CD4-positive, alpha-beta memory T cell (primary cell): ENCODE measurements at regions of chr5 and their contacts with region 1.

Region 1: GRCh38 chr5:43484106-43484849 is 613 bp upstream of the TMEM267 start:
- DNase-seq: peak; percentile 85 to 89 (median 87)
- H3K4me3 ChIP-seq: peak overlapping the region; percentile 50 to 59
- H3K4me3 Mint-ChIP-seq: peak overlapping the region; percentile 96 to 99 (median 98)
- H3K27ac ChIP-seq: peak overlapping the region; percentile 92
- H3K27ac Mint-ChIP-seq: peak overlapping the region; percentile 98 to 100 (median 100)
- H3K4me1 ChIP-seq: peaks cover 40% of the 10 kb centered on the region
- H3K4me1 Mint-ChIP-seq: peaks cover 21 to 57% (median 31%) of the 10 kb centered on the region in 4 donors
- H3K27me3 ChIP-seq: no peaks in the 10 kb centered on the region
- H3K27me3 Mint-ChIP-seq: no peaks in the 10 kb centered on the region

Region 2: DNA sequence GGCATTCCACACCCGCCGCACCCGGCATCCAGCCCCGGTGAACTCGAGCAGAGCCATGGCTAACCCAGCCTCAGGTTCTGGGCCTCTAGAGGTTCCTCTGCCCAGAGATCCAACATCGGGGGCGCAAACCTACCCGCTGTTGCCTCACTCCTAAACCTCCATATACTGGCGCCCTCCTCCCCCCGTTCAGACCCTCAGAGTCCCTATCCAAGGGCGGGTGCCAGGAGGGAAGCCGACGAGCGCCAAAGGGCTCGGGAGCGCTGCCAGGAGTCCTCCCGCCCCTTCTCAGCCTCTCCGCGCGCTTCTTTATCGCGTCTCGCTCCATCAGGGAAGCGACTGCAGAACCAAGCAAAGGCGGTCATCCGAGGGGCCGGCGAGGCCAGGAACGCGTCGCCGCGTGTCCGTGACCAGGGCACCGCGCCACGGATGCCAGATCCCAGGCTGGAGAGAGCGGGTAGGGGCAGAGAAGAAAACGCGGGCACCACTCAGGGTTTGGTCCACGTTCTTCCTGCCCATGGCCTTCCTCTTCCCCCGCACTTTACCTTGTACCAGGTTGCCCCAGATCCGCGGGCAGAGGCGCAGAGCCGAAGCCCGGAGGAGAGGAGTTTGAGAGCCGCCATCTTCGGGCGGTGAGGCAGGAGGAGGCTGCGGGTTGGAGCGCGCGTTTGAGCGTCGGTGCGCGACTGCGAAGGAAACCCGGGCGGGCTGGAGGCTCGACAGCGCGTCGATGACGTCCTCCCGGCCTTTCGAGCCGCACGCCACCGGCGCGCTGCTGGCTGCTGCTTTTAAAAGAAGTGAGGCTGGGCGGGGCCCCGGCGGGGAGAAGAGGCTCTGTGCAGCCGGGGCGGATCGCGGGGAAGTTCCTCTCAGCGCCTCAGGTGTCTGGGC is 1614.3 kb before region 1 on chr5 and contains the start of gene OXCT1:
- CTCF ChIA-PET with region 1: interaction called, 3 read pairs
- POLR2A ChIA-PET with region 1: interaction called, 13 read pairs
- intact Hi-C with region 1: no loop called
- DNase-seq: peak; percentile 91 to 96 (median 96)
- H3K4me3 ChIP-seq: peak within 1 kb of the TSS; percentile 74 to 81
- H3K4me3 Mint-ChIP-seq: peak within 1 kb of the TSS; percentile 85 to 96 (median 91)
- H3K27ac ChIP-seq: peak within 1 kb of the TSS; percentile 93
- H3K27ac Mint-ChIP-seq: peak within 1 kb of the TSS; percentile 94 to 99 (median 97)
- H3K4me1 ChIP-seq: peaks cover 55% of the 10 kb centered on the region
- H3K4me1 Mint-ChIP-seq: peaks cover 37 to 70% (median 46%) of the 10 kb centered on the region in 4 donors
- H3K27me3 ChIP-seq: no peaks in the 10 kb centered on the region
- H3K27me3 Mint-ChIP-seq: no peaks in the 10 kb centered on the region
- total RNA-seq, gene OXCT1: 34.1 to 37.5 TPM

Region 3: DNA sequence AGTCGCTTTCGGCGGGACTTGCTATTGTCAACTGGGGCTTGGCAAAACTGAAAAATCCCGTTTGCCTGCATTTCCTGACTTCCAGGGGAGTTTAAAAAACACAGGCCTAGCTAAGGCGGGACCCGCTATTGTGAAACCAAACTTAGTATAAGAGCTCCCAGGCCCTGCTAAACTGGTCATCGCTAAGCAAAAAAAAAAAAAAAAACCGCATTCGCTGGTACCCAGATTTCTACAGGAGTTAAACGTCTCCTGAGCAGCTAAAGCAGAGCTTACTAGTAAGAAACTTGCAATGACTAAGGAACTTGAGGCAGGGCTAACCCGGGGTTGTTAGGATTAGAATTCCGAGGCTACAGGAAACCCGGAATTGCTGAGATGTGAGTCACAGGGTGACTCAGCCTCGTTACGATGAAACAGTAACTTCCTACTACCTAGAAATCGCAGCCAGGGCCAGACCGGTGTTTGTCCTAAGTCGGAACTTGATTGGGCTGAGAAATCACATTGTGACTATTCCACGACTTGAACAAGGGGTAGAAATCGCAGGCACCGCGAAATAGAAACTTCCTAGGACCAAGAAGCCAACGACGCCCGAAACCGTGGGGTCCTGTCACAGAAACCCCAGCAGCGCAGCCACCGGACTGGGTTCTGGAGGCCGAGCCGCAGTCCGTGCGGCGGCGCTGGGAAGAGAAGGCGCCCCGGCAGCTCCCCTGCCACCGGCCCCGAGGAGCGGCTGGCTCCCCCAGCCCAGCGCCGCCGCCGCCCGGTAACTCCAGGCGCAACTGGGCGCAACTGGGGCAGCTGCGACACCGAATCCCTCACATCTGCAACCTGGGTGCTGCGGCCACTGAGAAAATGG is 533.6 kb before region 1 on chr5:
- CTCF ChIA-PET with region 1: interaction called, 6 read pairs
- POLR2A ChIA-PET with region 1: interaction called, 44 read pairs
- intact Hi-C with region 1: no loop called
- DNase-seq: peak; percentile 61 to 90 (median 66)
- H3K4me3 ChIP-seq: peak overlapping the region; percentile 83 to 90
- H3K4me3 Mint-ChIP-seq: peak overlapping the region; percentile 93 to 99 (median 98)
- H3K27ac ChIP-seq: peak overlapping the region; percentile 96
- H3K27ac Mint-ChIP-seq: peak overlapping the region; percentile 99 to 100 (median 100)
- H3K4me1 ChIP-seq: peaks cover 22% of the 10 kb centered on the region
- H3K4me1 Mint-ChIP-seq: peaks cover 7 to 42% (median 30%) of the 10 kb centered on the region in 4 donors
- H3K27me3 ChIP-seq: no peaks in the 10 kb centered on the region
- H3K27me3 Mint-ChIP-seq: no peaks in the 10 kb centered on the region

Region 4: DNA sequence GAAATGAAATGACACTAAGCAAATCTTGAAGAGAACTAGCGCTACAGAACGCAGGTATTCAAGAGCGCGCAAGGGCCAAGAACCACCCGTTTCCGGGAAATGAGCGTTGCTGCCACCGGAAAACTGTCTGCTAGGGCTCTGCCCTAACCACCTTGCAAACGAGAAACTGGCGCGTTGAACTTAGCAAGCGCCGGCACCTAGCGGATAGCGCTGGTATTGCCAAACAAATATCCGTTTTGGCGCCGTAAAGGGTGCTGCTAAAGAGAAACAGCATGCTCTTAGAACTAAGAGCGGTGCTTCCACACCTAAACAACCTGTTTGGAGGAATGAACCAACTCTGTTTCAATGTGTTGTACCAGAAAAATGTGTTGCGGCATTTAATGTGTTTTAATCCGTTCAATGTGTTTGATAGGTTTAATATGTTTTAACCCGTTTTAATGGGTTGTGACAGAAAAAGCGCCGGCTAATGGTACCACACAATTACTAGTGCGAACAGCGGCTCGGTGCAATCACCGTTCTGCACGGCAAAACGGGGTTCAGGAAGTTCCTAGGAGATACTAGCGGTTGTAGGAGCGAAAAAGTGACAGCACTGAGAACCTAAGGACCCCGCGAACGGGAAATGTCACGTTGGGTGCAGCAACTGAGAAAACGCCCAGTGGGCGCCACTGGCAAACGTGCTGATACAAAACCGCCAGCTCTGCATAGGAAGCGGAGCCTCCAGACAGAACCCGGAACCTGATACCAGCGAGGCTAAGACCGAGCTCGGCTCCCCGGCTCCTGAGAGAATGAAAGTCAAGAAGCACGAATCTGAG is 443.8 kb before region 1 on chr5 and contains the start of gene ANXA2R:
- CTCF ChIA-PET with region 1: interaction called, 15 read pairs
- POLR2A ChIA-PET with region 1: interaction called, 63 read pairs
- intact Hi-C with region 1: no loop called
- DNase-seq: peak; percentile 94 to 97 (median 97)
- H3K4me3 ChIP-seq: peak within 1 kb of the TSS; percentile 78 to 99
- H3K4me3 Mint-ChIP-seq: peak within 1 kb of the TSS; percentile 97 to 100 (median 98)
- H3K27ac ChIP-seq: peak within 1 kb of the TSS; percentile 98
- H3K27ac Mint-ChIP-seq: peak within 1 kb of the TSS; percentile 99 to 100 (median 99)
- H3K4me1 ChIP-seq: peaks cover 50% of the 10 kb centered on the region
- H3K4me1 Mint-ChIP-seq: peaks cover 19 to 82% (median 39%) of the 10 kb centered on the region in 4 donors
- H3K27me3 ChIP-seq: no peaks in the 10 kb centered on the region
- H3K27me3 Mint-ChIP-seq: no peaks in the 10 kb centered on the region
- total RNA-seq, gene ANXA2R: 43.4 to 47.8 TPM

Region 5: GRCh38 chr5:43305948-43306565 is 178.2 kb before region 1 on chr5:
- CTCF ChIA-PET with region 1: interaction called, 40 read pairs
- POLR2A ChIA-PET with region 1: interaction called, 107 read pairs
- intact Hi-C with region 1: no loop called
- DNase-seq: peak; percentile 37 to 52 (median 46)
- H3K4me3 ChIP-seq: no peak overlapping the region
- H3K4me3 Mint-ChIP-seq: no peak overlapping the region
- H3K27ac ChIP-seq: no peak overlapping the region
- H3K27ac Mint-ChIP-seq: peak overlapping the region in 4 of 7 donors; percentile 15 to 78 (median 46)
- H3K4me1 ChIP-seq: peaks cover 7% of the 10 kb centered on the region
- H3K4me1 Mint-ChIP-seq: peaks cover 21 to 48% (median 33%) of the 10 kb centered on the region in 4 donors
- H3K27me3 ChIP-seq: no peaks in the 10 kb centered on the region
- H3K27me3 Mint-ChIP-seq: no peaks in the 10 kb centered on the region

Region 6: GRCh38 chr5:43453606-43454005 is 30.7 kb before region 1 on chr5:
- CTCF ChIA-PET with region 1: interaction called, 3 read pairs
- POLR2A ChIA-PET with region 1: interaction called, 7 read pairs
- intact Hi-C with region 1: loop called (anchors 2 kb)
- DNase-seq: no peak
- H3K4me3 ChIP-seq: no peak overlapping the region
- H3K4me3 Mint-ChIP-seq: no peak overlapping the region
- H3K27ac ChIP-seq: no peak overlapping the region
- H3K27ac Mint-ChIP-seq: no peak overlapping the region
- H3K4me1 ChIP-seq: no peaks in the 10 kb centered on the region
- H3K4me1 Mint-ChIP-seq: peaks cover 0 to 3% (median 0%) of the 10 kb centered on the region in 4 donors
- H3K27me3 ChIP-seq: no peaks in the 10 kb centered on the region
- H3K27me3 Mint-ChIP-seq: no peaks in the 10 kb centered on the region

Region 7: GRCh38 chr5:43556857-43557542 is 72.7 kb after region 1 on chr5 and contains the start of gene PAIP1:
- CTCF ChIA-PET with region 1: interaction called, 36 read pairs
- POLR2A ChIA-PET with region 1: interaction called, 124 read pairs
- intact Hi-C with region 1: loop called (anchors 1 kb)
- DNase-seq: peak; percentile 86 to 91 (median 88)
- H3K4me3 ChIP-seq: peak within 1 kb of the TSS; percentile 79 to 84
- H3K4me3 Mint-ChIP-seq: peak within 1 kb of the TSS; percentile 91 to 98 (median 94)
- H3K27ac ChIP-seq: peak within 1 kb of the TSS; percentile 84
- H3K27ac Mint-ChIP-seq: peak within 1 kb of the TSS; percentile 93 to 99 (median 97)
- H3K4me1 ChIP-seq: peaks cover 41% of the 10 kb centered on the region
- H3K4me1 Mint-ChIP-seq: peaks cover 7 to 13% (median 10%) of the 10 kb centered on the region in 4 donors
- H3K27me3 ChIP-seq: no peaks in the 10 kb centered on the region
- H3K27me3 Mint-ChIP-seq: no peaks in the 10 kb centered on the region
- total RNA-seq, gene PAIP1: 36.0 to 38.0 TPM